ENCODE measurements at regions of chr3 and their contacts with region 1.

Region 1: DNA sequence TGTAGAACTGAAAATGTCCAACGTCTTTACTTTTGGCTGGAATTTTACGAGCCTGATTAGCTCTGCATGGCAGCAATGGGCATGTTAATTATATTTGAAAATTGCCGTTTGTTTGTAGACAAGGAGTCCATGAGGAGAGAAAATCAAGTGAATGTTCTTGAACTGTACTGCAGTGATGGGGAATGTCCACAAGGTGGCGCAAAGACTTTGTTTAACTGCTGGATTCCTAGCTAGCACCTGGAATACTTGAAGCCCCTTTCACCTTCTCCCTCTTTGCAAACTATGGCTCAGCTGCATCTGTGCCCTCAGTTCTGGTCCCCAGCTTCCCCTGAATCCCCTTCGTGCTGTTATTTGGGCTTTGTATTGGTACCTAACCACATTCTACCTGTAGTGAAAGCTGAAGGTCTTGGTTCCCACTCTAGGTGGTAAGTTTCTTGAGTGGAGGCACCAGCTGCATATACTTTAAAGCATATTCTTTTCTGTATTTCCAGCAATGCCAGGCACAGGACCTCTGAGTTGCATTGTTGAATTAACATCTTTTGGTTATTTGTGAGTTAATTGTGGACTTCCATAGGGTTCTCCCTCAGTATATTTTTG is 25.3 kb downstream of the EXOG start:
- DNase-seq: peak; percentile 76
- ATAC-seq: no peak
- H3K4me3 Mint-ChIP-seq: no peak overlapping the region
- H3K27ac Mint-ChIP-seq: no peak overlapping the region
- H3K4me1 Mint-ChIP-seq: peaks cover 29% of the 10 kb centered on the region
- H3K27me3 Mint-ChIP-seq: no peaks in the 10 kb centered on the region

Region 2: DNA sequence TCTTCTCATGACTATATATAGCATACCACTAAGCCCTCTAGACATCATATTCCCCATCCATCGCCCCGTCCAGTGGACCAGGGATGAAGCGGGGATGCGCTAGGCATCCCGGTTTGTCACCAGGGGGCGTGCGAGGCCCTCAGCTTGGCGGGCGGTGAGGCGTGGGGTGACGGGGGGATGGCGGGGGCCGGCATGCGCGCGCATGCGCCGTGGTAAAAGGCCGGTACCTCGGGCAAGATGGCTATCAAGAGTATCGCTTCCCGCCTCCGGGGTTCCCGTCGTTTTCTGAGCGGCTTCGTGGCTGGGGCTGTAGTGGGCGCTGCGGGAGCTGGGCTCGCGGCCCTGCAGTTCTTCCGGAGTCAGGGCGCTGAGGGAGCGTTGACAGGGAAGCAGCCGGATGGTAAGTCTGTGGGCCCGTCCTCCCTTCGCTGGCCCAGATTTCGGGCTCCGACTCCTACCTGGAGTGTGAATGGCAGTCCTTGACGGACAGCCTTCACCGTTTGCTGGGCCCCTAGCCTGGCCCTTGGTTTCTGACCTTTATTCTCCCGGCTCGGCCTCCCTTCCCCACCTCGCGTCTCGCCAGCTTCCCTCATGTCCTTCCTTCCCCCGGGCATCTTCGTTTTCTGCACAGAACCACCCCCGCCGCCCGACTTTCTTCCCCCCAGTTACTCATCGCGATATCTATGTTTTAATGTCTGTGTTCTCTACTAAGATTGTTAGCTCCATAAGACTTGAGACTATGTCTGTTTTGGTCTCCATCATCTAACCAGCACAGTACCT is 25.2 kb before region 1 on chr3 and contains the start of gene EXOG:
- CTCF ChIA-PET with region 1: interaction called, 30 read pairs
- DNase-seq: peak; percentile 96
- ATAC-seq: peak; percentile 92
- H3K4me3 Mint-ChIP-seq: peak within 1 kb of the TSS; percentile 94
- H3K27ac Mint-ChIP-seq: peak within 1 kb of the TSS; percentile 93
- H3K4me1 Mint-ChIP-seq: peaks cover 23% of the 10 kb centered on the region
- H3K27me3 Mint-ChIP-seq: no peaks in the 10 kb centered on the region
- total RNA-seq, gene EXOG: 19.7 to 23.8 TPM

Region 3: GRCh38 chr3:38507120-38507519 is 14.4 kb before region 1 on chr3:
- CTCF ChIA-PET with region 1: interaction called, 26 read pairs
- DNase-seq: no peak
- ATAC-seq: no peak
- H3K4me3 Mint-ChIP-seq: no peak overlapping the region
- H3K27ac Mint-ChIP-seq: no peak overlapping the region
- H3K4me1 Mint-ChIP-seq: no peaks in the 10 kb centered on the region
- H3K27me3 Mint-ChIP-seq: no peaks in the 10 kb centered on the region

Region 4: DNA sequence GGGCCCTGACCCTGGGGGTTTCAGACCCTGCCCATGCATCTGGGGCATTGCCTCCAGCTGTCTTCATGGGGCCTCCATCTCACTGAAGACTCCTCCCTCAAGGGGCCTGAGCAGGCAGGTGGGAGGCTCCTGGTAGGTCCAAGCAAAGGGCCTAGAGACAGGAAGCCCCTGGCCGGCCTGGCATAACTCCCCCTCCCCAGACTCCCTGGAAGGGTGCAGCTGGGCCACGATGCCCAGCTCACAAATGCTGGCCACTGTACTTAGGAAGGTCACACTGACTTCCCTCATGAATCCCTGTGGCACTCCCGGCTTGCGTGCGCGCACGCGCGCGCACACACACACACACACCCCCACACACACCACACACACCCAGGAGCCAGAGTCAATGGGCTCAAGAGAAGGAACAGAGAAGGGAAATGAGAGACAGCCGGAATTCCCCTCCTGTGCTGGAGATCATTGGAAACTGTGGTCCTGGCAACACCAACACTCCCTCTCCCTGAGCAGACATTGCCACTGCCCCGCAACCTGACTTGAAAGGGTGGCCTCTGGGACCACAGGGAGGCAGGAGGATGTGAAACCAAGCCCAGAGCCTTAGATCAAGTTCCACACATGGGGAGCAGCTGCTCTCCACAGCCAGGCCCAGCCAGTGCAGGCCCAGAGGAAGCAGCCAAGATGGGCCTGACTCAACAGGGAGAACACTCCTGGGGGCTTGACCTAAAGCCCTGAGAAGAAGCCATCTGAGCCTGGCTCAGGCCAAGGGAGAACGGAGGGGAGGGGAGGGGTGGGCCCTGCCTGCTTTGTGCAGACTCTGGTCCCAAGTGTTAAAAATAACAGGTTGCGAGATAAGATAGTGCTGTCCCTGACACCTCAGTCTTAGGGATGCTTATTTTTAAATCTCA is 58.3 kb after region 1 on chr3:
- CTCF ChIA-PET with region 1: no interaction called
- DNase-seq: peak; percentile 14
- ATAC-seq: no peak
- H3K4me3 Mint-ChIP-seq: no peak overlapping the region
- H3K27ac Mint-ChIP-seq: no peak overlapping the region
- H3K4me1 Mint-ChIP-seq: no peaks in the 10 kb centered on the region
- H3K27me3 Mint-ChIP-seq: no peaks in the 10 kb centered on the region

Region 5: GRCh38 chr3:38651154-38651789 is 129.8 kb after region 1 on chr3:
- CTCF ChIA-PET with region 1: interaction called, 69 read pairs
- DNase-seq: peak; percentile 77
- ATAC-seq: peak; percentile 57
- H3K4me3 Mint-ChIP-seq: no peak overlapping the region
- H3K27ac Mint-ChIP-seq: no peak overlapping the region
- H3K4me1 Mint-ChIP-seq: peaks cover 8% of the 10 kb centered on the region
- H3K27me3 Mint-ChIP-seq: peaks cover 20% of the 10 kb centered on the region

Region 6: DNA sequence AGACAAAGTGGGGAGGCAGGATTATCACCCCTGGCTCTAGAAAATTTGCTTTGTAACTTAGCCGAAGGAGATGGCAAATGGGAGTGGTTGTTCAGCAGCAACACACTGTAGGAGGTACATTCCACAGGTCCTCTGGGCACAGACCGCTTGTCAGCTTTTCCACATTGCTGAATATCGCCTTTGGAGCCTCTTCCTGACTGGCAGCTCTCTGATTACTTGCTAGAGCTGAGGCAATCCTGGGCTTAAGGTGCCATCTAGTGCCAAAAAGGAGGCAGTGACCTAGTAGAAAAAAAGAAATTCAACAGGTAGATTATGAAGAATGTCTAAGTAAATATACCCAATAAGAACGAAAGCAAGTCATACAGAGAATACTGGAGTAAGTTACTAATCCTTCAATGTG is 141.1 kb after region 1 on chr3:
- CTCF ChIA-PET with region 1: interaction called, 41 read pairs
- DNase-seq: no peak
- ATAC-seq: no peak
- H3K4me3 Mint-ChIP-seq: no peak overlapping the region
- H3K27ac Mint-ChIP-seq: no peak overlapping the region
- H3K4me1 Mint-ChIP-seq: no peaks in the 10 kb centered on the region
- H3K27me3 Mint-ChIP-seq: peaks cover 53% of the 10 kb centered on the region

Region 7: GRCh38 chr3:39000008-39000450 is 478.5 kb after region 1 on chr3:
- CTCF ChIA-PET with region 1: interaction called, 24 read pairs
- DNase-seq: no peak
- ATAC-seq: peak; percentile 65
- H3K4me3 Mint-ChIP-seq: no peak overlapping the region
- H3K27ac Mint-ChIP-seq: no peak overlapping the region
- H3K4me1 Mint-ChIP-seq: no peaks in the 10 kb centered on the region
- H3K27me3 Mint-ChIP-seq: peaks cover 20% of the 10 kb centered on the region